Dendritic cell treated with granulocyte-macrophage colony-stimulating factor and Interleukin-4, amounts not matched to agents 40 ng/mL and 50 ng/mL, for 4 days (primary cell): ENCODE measurements at regions of chr21 and their contacts with region 1.

Region 1: GRCh38 chr21:29550205-29550604 is 251.5 kb downstream of the BACH1 start:
- H3K4me3 Mint-ChIP-seq: no peak overlapping the region
- H3K27ac Mint-ChIP-seq: no peak overlapping the region
- H3K4me1 Mint-ChIP-seq: no peaks in the 10 kb centered on the region
- H3K27me3 Mint-ChIP-seq: no peaks in the 10 kb centered on the region

Region 2: DNA sequence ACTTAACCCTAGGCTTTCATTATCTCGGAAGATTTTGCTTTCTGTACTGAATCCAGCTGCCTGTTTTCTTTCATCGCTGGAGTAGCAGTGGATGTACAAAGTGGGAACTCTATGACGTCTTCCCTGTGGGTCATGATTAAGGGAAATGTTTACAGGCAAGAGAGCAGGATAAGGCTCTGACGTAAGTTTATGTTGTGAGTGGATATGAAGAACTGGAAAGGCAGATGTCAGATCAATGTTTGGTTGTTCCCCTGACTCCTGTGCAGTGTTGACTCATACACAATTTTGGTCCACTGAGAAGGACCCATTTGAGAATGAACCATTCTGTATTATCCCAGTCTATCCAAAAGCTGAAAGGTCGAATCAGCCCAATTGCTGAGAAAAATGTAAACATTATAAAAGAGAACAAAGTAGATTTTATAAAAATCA is 97.2 kb after region 1 on chr21:
- intact Hi-C with region 1: loop called (anchors 5 kb)
- H3K4me3 Mint-ChIP-seq: no peak overlapping the region
- H3K27ac Mint-ChIP-seq: no peak overlapping the region
- H3K4me1 Mint-ChIP-seq: peaks cover 17% of the 10 kb centered on the region
- H3K27me3 Mint-ChIP-seq: no peaks in the 10 kb centered on the region